ENCODE measurements at regions of chr3 and their contacts with region 1.

Region 1: DNA sequence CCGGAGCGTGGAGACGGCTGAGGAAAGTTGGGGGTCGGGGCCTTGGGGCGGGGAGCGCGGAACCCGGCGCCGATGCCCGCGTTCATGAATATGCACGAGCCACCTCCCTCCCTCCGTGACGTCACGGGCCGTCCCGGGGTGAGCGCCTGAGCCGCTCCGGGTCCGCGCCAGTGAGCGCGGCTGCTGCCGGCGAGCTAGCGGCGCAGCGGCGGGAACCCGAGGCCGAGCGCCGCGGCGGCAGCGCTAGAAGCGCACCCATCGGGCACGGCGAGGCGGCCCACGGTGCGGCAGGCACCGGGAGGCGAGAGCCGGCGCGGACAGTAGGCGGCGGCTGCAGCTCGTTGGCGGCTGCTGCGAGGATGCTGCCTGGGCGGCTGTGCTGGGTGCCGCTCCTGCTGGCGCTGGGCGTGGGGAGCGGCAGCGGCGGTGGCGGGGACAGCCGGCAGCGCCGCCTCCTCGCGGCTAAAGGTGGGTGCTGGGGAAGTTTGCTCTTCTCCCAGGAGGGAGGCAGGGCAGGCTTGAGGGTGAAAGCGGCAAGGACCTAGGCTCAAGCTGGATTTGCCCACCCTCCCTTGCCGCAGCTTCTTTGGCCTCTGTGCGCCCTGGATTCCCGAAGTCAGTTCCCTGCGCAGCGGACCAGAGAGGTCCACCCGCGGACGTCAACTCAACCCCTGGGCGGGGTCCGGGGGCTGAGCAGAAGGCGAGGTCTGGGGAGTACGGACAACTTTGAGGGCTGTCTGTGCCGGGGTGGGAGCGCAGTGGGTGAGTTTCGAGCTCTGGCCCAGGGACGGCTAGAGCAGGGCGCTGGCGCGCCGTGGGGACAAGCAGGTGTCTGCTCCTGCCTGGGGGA is at the start of gene CLSTN2:
- DNase-seq: peak; percentile 32 to 89 (median 79)

Region 2: GRCh38 chr3:139533781-139534443 is 401.3 kb before region 1 on chr3:
- intact Hi-C with region 1: loop called (anchors 10 kb)
- DNase-seq: peak in 14 of 42 donors; percentile 18 to 59 (median 37)

Region 3: DNA sequence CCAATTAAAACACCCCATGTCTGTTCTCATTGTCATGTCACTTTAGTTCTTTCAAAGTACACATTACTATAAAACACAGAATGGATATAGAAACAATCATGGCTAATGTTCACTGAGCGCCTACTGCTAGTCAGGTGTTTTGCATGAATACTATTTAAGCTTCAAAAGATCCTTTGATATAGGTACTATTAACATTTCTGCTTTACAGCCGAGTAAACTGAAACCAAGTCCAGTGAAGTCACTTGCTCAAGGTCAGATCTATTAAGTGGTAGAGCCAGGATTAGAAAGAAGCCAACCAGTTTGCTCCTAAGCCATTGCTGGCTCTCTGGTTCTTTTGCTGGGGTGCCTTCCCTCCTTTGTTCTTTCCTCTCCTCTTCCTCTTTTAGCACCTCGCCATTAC is 225.0 kb before region 1 on chr3:
- intact Hi-C with region 1: no loop called
- DNase-seq: no peak

Region 4: GRCh38 chr3:140292684-140293083 is 357.4 kb after region 1 on chr3:
- intact Hi-C with region 1: no loop called
- DNase-seq: peak in 9 of 42 donors; percentile 3 to 42 (median 27)

Measured in head of caudate nucleus (tissue), 42 donors.